Activated T-helper 1 cell treated with anti-CD3 and anti-CD28 coated beads, Interleukin-12 subunit alpha, Interleukin-12 subunit beta, Interleukin-2, Interleukin-4 antibody, amounts not matched to agents 30 ng/mL and 10 ng/mL and 1 ng/mL, durations not matched to agents 14 hours and 24 hours and 36 hours (primary cell): ENCODE measurements at regions of chr10 and their contacts with region 1.

Region 1: GRCh38 chr10:25522946-25523608 is 348.3 kb downstream of the GPR158 start:
- DNase-seq: no peak
- H3K4me3 Mint-ChIP-seq: no peak overlapping the region
- H3K27ac Mint-ChIP-seq: no peak overlapping the region
- H3K4me1 Mint-ChIP-seq: no peaks in the 10 kb centered on the region
- H3K27me3 Mint-ChIP-seq: no peaks in the 10 kb centered on the region

Region 2: DNA sequence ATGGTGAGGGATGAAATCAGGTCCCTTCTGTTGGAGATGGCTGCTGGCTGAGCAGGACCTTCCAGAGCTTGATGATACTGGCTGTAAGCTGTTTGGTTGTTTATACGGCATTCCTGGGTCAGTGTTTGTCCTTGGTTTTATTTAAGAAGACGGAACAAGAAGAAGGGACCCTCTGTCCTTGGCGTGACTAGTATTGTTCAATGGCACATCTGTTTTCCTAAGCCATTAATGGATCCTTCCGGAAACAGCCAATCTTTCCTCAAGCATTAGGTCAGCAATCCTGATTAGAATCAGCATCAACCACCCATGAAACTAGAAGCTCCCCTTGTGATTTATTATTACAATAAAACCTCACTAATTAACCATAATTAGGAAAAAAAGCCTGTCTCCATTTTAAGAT is 1442.9 kb before region 1 on chr10:
- intact Hi-C with region 1: no loop called
- DNase-seq: no peak
- H3K4me3 Mint-ChIP-seq: no peak overlapping the region
- H3K27ac Mint-ChIP-seq: no peak overlapping the region
- H3K4me1 Mint-ChIP-seq: no peaks in the 10 kb centered on the region
- H3K27me3 Mint-ChIP-seq: no peaks in the 10 kb centered on the region

Region 3: DNA sequence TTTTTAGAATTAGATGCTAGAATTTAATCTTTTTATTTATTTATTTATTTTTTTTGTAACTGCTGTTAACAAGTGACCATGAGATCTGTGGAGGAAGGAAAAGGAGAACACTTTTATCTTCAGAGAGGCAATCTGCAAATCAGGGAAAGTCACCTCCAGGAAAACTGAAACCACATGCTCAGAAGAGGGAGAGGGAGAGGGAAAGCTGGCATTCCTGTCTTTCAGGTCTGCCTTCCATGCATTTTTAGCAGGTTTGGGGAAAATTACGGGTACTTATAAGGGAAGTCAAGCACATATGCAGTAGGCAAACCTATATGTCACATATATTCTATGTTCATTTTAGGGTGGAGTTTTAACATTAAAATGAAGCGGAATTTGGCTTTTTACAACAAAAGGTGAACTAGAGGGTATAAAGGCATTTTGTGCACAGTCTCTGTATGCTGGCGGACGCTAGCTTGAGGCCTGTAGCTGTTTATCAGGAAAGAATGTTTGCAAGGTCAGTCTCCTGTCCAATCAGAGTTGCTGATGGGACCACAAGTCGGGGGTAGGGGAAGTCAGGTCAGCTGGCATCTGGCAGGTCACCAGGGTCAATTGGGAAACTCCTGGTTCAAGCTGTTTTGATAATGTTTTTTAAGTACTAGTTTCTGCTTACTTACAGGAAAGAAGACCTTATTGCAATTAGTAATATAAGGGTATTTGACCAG is 14.8 kb before region 1 on chr10:
- intact Hi-C with region 1: loop called (anchors 2 kb)
- DNase-seq: no peak
- H3K4me3 Mint-ChIP-seq: no peak overlapping the region
- H3K27ac Mint-ChIP-seq: no peak overlapping the region
- H3K4me1 Mint-ChIP-seq: no peaks in the 10 kb centered on the region
- H3K27me3 Mint-ChIP-seq: no peaks in the 10 kb centered on the region

Region 4: DNA sequence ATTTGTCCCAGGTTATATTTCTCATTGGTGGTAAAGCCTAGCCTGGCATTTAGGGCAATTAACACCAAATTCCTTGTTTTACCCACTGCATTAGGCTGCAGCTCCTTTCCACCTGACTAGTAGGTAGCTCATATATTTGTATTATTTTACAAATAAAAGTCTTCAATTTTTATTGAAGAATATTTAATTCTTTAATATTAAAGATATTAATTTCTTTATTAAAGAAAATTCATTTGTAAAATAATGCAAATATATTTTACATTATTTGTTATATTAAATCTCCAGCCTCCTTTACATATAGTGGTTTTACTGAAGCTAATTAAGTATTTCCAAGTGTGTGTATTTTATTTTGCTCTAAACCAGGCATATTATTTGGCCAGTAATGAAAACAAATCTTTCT is 12.9 kb after region 1 on chr10:
- intact Hi-C with region 1: no loop called
- DNase-seq: no peak
- H3K4me3 Mint-ChIP-seq: no peak overlapping the region
- H3K27ac Mint-ChIP-seq: no peak overlapping the region
- H3K4me1 Mint-ChIP-seq: no peaks in the 10 kb centered on the region
- H3K27me3 Mint-ChIP-seq: no peaks in the 10 kb centered on the region